Activated T-helper 2 cell treated with anti-CD3 and anti-CD28 coated beads, Interferon-gamma antibody, Interleukin-2, Interleukin-4, amounts not matched to agents 10 μg/mL and 5 μg/mL and 100 μg/mL, durations not matched to agents 14 hours and 24 hours and 36 hours (primary cell): ENCODE measurements at regions of chr6 and their contacts with region 1.

Region 1: GRCh38 chr6:117555882-117556498 is 46.3 kb downstream of the GOPC start:
- DNase-seq: peak; percentile 27
- H3K4me3 Mint-ChIP-seq: no peak overlapping the region
- H3K27ac Mint-ChIP-seq: no peak overlapping the region
- H3K4me1 Mint-ChIP-seq: peaks cover 4% of the 10 kb centered on the region
- H3K27me3 Mint-ChIP-seq: peaks cover 2% of the 10 kb centered on the region

Region 2: GRCh38 chr6:117346142-117346930 is 209.7 kb before region 1 on chr6:
- intact Hi-C with region 1: loop called (anchors 5 kb)
- DNase-seq: no peak
- H3K4me3 Mint-ChIP-seq: no peak overlapping the region
- H3K27ac Mint-ChIP-seq: no peak overlapping the region
- H3K4me1 Mint-ChIP-seq: no peaks in the 10 kb centered on the region
- H3K27me3 Mint-ChIP-seq: peaks cover 7% of the 10 kb centered on the region

Region 3: DNA sequence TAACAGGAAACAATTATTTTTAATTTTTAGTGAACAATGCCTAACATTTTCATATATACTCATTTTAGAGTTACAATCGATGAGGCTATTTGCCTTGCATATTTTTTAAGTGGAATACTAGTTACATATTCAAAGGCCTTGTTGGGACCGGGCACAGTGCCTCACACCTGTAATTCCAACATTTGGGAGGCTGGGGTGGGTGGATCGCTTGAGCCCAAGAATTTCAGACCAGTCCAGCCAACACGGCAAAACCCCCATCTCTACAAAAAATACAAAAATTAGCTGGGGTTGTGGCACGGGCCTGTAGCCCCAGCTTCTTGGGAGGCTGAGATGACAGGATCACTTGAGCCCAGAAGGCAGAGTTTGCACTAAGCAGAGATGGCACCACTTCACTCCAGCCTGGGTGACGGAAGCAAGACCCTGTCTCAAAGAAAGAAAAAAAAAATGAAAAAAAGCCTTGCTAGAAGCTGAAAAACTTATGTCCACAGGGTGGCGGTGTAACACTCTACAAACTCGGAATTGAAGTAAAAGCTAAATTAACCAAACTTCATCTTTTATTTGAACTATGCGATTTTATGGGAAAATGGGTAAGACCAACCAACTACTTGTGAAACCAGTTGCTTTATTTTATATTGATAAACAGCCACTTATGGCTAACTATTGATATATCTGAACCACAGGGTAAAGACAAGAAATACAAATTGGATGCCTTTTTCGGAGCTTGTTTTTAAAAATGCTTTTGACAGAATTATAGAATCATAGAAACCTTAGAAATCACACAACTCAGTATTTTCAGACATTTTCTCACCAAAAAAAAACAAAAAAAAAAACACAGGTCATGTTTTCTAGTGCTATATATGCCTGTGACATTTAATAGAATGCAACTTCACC is 106.2 kb before region 1 on chr6:
- intact Hi-C with region 1: loop called (anchors 1 kb)
- DNase-seq: peak; percentile 27
- H3K4me3 Mint-ChIP-seq: no peak overlapping the region
- H3K27ac Mint-ChIP-seq: no peak overlapping the region
- H3K4me1 Mint-ChIP-seq: peaks cover 1% of the 10 kb centered on the region
- H3K27me3 Mint-ChIP-seq: peaks cover 48% of the 10 kb centered on the region